ENCODE measurements at regions of chr3 and their contacts with region 1.

Region 1: GRCh38 chr3:138068579-138069174 is 46.7 kb downstream of the DZIP1L start:
- DNase-seq: peak in 1 of 2 donors; percentile 84
- H3K4me3 ChIP-seq: no peak overlapping the region
- H3K27ac ChIP-seq: no peak overlapping the region
- H3K4me1 ChIP-seq: no peaks in the 10 kb centered on the region
- H3K27me3 ChIP-seq: no peaks in the 10 kb centered on the region
- CTCF ChIP-seq: peak; percentile 92 to 97 (median 93)

Region 2: GRCh38 chr3:138174421-138175122 is 105.9 kb after region 1 on chr3 and contains the start of gene DBR1:
- intact Hi-C with region 1: loop called (anchors 5 kb)
- DNase-seq: peak; percentile 15 to 88
- H3K4me3 ChIP-seq: peak within 1 kb of the TSS; percentile 62 to 70
- H3K27ac ChIP-seq: peak within 1 kb of the TSS; percentile 53 to 71
- H3K4me1 ChIP-seq: peaks cover 5 to 13% of the 10 kb centered on the region in 2 donors
- H3K27me3 ChIP-seq: no peaks in the 10 kb centered on the region
- CTCF ChIP-seq: no peak
- total RNA-seq, gene DBR1: 2.0 TPM